ENCODE measurements at regions of chr17 and their contacts with region 1.

Region 1: DNA sequence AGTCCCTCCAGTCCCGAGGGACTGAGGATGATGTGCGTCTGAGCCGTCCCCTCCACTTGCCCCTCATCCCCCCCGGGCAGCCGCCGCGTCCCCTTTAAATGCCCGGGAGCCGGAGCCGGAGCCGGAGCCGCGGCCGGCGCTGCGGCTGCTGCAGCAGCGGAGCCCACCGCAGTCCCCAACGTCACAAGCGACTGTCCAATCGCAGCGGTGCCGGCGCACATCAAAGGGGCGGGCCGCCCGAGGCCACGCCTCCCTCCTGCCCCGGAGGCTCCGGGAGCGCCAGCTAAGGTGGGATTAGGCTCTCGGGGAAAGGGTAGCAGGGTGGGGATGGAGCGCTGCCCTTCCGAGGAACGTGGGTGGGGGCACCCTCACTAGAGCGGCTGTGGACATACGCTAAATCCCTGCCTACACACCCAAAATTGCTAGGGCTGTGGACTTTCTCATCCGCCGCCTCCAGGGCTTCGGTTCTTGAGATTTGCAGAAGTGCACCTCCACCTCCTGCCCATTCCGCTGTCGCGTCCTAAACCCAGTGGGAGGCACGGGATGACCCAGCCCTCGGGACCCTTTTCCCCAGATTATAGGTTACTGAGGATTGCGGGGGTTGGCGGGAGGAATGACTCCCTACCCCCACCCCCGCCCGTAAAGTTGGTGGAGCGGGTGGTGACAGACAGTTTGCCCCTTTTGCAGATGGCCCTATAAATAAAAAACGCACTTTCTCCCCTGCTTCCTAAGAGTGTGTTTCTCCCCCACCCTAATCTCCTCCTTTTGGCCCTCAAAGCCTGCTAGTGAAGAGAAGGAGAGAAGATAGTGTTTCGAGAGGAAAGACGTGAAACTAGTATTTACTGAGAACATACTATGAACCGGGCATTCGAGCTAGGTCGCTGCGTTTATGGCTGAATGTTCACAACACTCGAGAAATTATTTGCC is at the start of gene PHOSPHO1:
- DNase-seq: peak; percentile 99
- H3K4me3 ChIP-seq: peak within 1 kb of the TSS; percentile 61 to 73
- H3K27ac ChIP-seq: no peak within 1 kb of the TSS
- H3K4me1 ChIP-seq: peaks cover 0 to 9% of the 10 kb centered on the region in 2 experiments; a peak in 1 of 4 replicates
- H3K27me3 ChIP-seq: peaks cover 53% of the 10 kb centered on the region
- CTCF ChIP-seq: no peak
- EP300 ChIP-seq: no peak
- RAD21 ChIP-seq: no peak
- polyA plus RNA-seq, gene PHOSPHO1: 0.13 TPM in 1 of 2 replicates, not detected in the other

Region 2: GRCh38 chr17:49022391-49022941 is 208.4 kb before region 1 on chr17:
- CTCF ChIA-PET with region 1: no interaction called
- POLR2A ChIA-PET with region 1: no interaction called
- DNase-seq: no peak
- H3K4me3 ChIP-seq: no peak overlapping the region
- H3K27ac ChIP-seq: no peak overlapping the region
- H3K4me1 ChIP-seq: peaks cover 0 to 10% of the 10 kb centered on the region in 2 experiments; a peak in 1 of 4 replicates
- H3K27me3 ChIP-seq: peaks cover 80% of the 10 kb centered on the region; the same call in 1 of the 2 replicates
- CTCF ChIP-seq: no peak
- EP300 ChIP-seq: no peak
- RAD21 ChIP-seq: no peak

Region 3: GRCh38 chr17:49121696-49122292 is 109.1 kb before region 1 on chr17:
- CTCF ChIA-PET with region 1: no interaction called
- POLR2A ChIA-PET with region 1: no interaction called
- DNase-seq: no peak
- H3K4me3 ChIP-seq: no peak overlapping the region; a peak in 1 of 4 replicates
- H3K27ac ChIP-seq: no peak overlapping the region
- H3K4me1 ChIP-seq: no peaks in the 10 kb centered on the region
- H3K27me3 ChIP-seq: peaks cover 76% of the 10 kb centered on the region
- CTCF ChIP-seq: no peak
- EP300 ChIP-seq: no peak
- RAD21 ChIP-seq: no peak

Region 4: DNA sequence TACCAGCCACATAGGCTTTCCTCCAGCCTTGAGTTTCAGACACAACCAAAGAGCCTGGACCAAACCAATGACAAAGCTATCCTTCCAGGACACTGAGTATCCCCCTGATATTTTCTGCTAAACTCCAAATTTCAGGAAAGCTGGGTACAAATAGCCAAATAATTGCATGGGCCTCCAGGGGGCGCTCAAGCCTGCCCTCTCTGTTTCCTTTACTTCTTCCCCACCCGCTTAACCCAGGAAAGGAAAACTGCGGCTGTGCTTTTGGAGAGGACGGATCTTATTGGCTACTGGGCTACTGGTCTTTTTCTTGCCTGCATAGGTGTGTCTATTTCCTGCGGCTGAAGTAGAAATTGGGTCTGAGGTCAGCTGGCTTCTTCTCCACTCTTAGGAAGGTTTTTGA is 50.6 kb before region 1 on chr17:
- CTCF ChIA-PET with region 1: interaction called, 100 read pairs
- POLR2A ChIA-PET with region 1: no interaction called
- DNase-seq: peak; percentile 78
- H3K4me3 ChIP-seq: peak overlapping the region in 1 of 2 experiments; percentile 9; a peak in 1 of 4 replicates
- H3K27ac ChIP-seq: no peak overlapping the region
- H3K4me1 ChIP-seq: no peaks in the 10 kb centered on the region
- H3K27me3 ChIP-seq: peaks cover 55% of the 10 kb centered on the region; the same call in 1 of the 2 replicates
- CTCF ChIP-seq: peak; percentile 97
- EP300 ChIP-seq: no peak
- RAD21 ChIP-seq: peak; percentile 82

Region 5: DNA sequence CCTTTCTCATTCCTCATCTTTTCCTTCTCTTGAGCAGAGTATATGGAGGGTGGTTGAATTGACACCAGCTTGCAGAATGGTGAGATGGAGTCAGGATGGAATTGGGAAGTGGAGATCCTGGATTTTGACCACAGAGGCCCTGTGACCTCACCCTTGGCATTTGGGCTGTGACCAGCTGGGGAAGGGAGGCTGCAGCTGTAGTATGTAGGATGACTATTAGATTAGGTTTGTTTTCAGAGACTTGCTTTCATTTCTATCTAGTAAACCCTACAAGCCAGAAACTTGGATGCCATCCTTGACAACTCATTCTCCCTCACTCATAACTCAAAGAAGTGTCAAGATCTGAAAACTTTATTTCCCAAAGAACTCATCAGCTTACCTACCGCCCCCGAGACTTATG is 26.4 kb before region 1 on chr17:
- CTCF ChIA-PET with region 1: interaction called, 32 read pairs
- POLR2A ChIA-PET with region 1: no interaction called
- DNase-seq: no peak
- H3K4me3 ChIP-seq: no peak overlapping the region
- H3K27ac ChIP-seq: no peak overlapping the region
- H3K4me1 ChIP-seq: peaks cover 0 to 14% of the 10 kb centered on the region in 2 experiments; a peak in 2 of 4 replicates
- H3K27me3 ChIP-seq: no peaks in the 10 kb centered on the region
- CTCF ChIP-seq: no peak
- EP300 ChIP-seq: no peak
- RAD21 ChIP-seq: no peak

Region 6: GRCh38 chr17:49260011-49260921 is 29.4 kb after region 1 on chr17:
- CTCF ChIA-PET with region 1: interaction called, 13 read pairs
- POLR2A ChIA-PET with region 1: no interaction called
- DNase-seq: peak; percentile 81
- H3K4me3 ChIP-seq: peak overlapping the region; percentile 49 to 58
- H3K27ac ChIP-seq: peak overlapping the region in 1 of 2 experiments; percentile 46; a peak in 2 of 4 replicates
- H3K4me1 ChIP-seq: peaks cover 4% of the 10 kb centered on the region in 2 experiments; a peak in 1 of 4 replicates
- H3K27me3 ChIP-seq: no peaks in the 10 kb centered on the region
- CTCF ChIP-seq: no peak
- EP300 ChIP-seq: no peak
- RAD21 ChIP-seq: no peak

Region 7: DNA sequence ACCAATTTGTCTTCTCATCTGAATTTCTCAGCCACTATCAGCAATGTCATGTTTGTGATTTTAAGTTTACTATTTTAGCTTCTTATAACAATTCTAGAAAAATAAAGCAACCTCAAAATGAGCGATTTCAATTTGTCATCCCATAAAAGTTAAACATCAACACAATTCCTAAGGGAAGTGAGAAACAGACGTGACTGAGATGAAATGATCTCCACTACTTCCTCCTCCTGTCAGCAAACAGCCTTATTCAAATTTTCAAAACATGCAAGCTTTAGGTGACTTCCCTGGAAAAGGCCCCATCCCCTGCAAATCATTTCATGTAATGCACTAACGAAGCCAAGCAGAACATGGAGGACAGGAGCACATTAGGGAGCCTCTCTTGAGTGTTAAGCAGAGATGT is 66.2 kb after region 1 on chr17:
- CTCF ChIA-PET with region 1: interaction called, 26 read pairs
- POLR2A ChIA-PET with region 1: no interaction called
- DNase-seq: no peak
- H3K4me3 ChIP-seq: no peak overlapping the region
- H3K27ac ChIP-seq: no peak overlapping the region
- H3K4me1 ChIP-seq: no peaks in the 10 kb centered on the region
- H3K27me3 ChIP-seq: no peaks in the 10 kb centered on the region
- CTCF ChIP-seq: no peak
- EP300 ChIP-seq: no peak
- RAD21 ChIP-seq: no peak

Measured in SK-N-SH (cell line).